Activated CD4-positive, alpha-beta T cell treated with anti-CD3 and anti-CD28 coated beads for 36 hours (primary cell): ENCODE measurements at regions of chr16 and their contacts with region 1.

Region 1: DNA sequence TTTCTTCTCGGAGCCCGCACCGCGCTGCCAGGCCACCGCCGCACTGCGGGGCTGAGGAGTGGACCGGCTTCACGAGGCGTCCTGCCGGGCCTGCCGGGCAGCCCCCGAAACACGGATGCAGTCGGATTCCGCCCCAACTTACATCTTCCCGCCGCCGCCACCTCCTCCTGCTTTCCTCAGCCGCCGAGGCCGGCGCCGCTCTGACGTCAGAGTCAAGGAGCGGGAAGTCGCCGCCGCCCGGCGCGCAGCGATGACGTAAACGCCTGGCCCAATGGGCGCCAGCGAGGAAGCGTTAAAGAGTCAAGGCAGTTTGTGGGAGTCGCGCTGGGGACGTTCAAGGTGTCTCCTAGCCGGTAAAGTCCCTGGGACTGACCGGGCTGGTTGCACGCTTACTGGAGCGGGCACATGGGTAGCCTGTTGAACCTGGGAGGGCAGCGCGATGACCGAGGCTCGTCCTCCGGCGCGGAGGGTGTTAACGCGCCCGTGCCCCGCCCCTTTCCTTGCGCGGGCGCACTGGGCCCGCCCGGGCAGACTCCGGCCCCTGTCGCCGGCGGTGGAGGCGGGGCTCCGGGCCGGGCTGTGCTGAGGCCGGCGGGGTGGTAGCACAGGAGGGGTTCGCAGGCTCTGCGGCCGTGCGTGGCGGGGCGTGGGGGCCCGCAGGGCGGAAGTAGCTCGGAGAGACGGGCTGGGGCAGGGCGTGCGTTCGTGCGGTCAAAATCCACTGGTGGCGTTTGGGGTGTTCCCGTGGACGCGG is at the start of gene RNPS1:
- DNase-seq: peak; percentile 98
- ATAC-seq: peak; percentile 86
- H3K4me3 Mint-ChIP-seq: peak within 1 kb of the TSS; percentile 92
- H3K27ac Mint-ChIP-seq: peak within 1 kb of the TSS; percentile 96
- H3K4me1 Mint-ChIP-seq: peaks cover 34% of the 10 kb centered on the region
- H3K27me3 Mint-ChIP-seq: no peaks in the 10 kb centered on the region
- total RNA-seq, gene RNPS1: 327 to 445 TPM

Region 2: DNA sequence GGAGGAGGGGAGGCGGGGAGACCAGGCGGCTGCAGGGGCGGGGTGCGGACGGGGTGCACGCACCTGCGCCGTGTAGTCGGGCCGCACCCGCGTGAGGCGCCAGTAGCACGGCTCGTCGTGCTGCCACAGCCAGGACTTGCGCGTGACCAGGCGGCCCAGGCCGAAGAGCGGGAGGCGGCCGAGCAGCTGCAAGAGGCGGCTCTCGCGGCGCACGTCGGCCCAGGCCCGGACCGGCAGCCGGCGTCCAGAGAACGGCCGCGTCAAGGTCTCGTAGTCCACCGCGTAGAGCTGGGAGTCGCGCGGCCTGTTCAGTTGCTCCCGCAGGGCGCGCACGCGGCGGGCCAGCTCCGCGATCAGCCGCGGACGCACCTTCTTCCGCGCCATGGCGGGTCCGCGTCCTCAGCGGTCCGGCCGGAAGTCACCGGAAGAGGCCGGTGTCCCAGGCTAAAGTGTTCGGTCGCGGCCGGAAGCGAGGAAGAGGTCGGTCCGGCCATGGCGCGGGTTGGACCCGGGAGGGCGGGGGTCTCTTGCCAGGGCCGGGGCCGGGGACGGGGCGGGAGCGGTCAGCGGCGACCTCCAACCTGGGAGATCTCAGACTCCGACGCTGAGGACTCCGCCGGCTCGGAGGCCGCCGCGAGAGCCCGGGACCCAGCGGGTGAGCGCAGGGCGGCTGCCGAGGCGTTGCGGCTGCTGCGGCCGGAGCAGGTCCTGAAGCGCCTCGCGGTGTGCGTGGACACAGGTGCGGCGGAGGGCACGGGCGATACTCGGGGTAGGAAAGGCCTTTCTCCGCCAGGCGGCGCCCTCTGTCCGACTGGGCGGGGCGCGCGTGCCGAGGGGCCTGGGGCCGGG is 495.1 kb before region 1 on chr16 and contains the starts of genes EME2 and MRPS34:
- CTCF ChIA-PET with region 1: no interaction called
- POLR2A ChIA-PET with region 1: no interaction called
- intact Hi-C with region 1: loop called in 1 of 2 experiments (anchors 1 kb)
- DNase-seq: peak; percentile 90
- ATAC-seq: peak; percentile 53
- H3K4me3 Mint-ChIP-seq: peak within 1 kb of the TSS; percentile 94
- H3K27ac Mint-ChIP-seq: peak within 1 kb of the TSS; percentile 99
- H3K4me1 Mint-ChIP-seq: peaks cover 9% of the 10 kb centered on the region
- H3K27me3 Mint-ChIP-seq: no peaks in the 10 kb centered on the region
- total RNA-seq, gene EME2: 13.1 to 18.4 TPM
- total RNA-seq, gene MRPS34: 146 to 175 TPM

Region 3: GRCh38 chr16:1991948-1992703 is 276.0 kb before region 1 on chr16:
- CTCF ChIA-PET with region 1: no interaction called
- POLR2A ChIA-PET with region 1: no interaction called
- intact Hi-C with region 1: loop called in 1 of 2 experiments (anchors 1 kb)
- DNase-seq: peak; percentile 100
- ATAC-seq: peak; percentile 70
- H3K4me3 Mint-ChIP-seq: peak overlapping the region; percentile 56
- H3K27ac Mint-ChIP-seq: no peak overlapping the region
- H3K4me1 Mint-ChIP-seq: peaks cover 27% of the 10 kb centered on the region
- H3K27me3 Mint-ChIP-seq: peaks cover 15% of the 10 kb centered on the region

Region 4: GRCh38 chr16:2213817-2214720 is 54.0 kb before region 1 on chr16:
- CTCF ChIA-PET with region 1: interaction called, 3 read pairs
- POLR2A ChIA-PET with region 1: no interaction called
- intact Hi-C with region 1: loop called (anchors 1 to 5 kb)
- DNase-seq: peak; percentile 40
- ATAC-seq: no peak
- H3K4me3 Mint-ChIP-seq: peak overlapping the region; percentile 79
- H3K27ac Mint-ChIP-seq: peak overlapping the region; percentile 45
- H3K4me1 Mint-ChIP-seq: peaks cover 18% of the 10 kb centered on the region
- H3K27me3 Mint-ChIP-seq: no peaks in the 10 kb centered on the region

Region 5: GRCh38 chr16:2459647-2460390 is 191.7 kb after region 1 on chr16 and contains the start of gene TEDC2:
- CTCF ChIA-PET with region 1: no interaction called
- POLR2A ChIA-PET with region 1: no interaction called
- intact Hi-C with region 1: loop called in 1 of 2 experiments (anchors 1 kb)
- DNase-seq: peak; percentile 99
- ATAC-seq: peak; percentile 98
- H3K4me3 Mint-ChIP-seq: peak within 1 kb of the TSS; percentile 73
- H3K27ac Mint-ChIP-seq: peak within 1 kb of the TSS; percentile 67
- H3K4me1 Mint-ChIP-seq: peaks cover 6% of the 10 kb centered on the region
- H3K27me3 Mint-ChIP-seq: no peaks in the 10 kb centered on the region
- total RNA-seq, gene TEDC2: 21.0 to 23.1 TPM

Region 6: DNA sequence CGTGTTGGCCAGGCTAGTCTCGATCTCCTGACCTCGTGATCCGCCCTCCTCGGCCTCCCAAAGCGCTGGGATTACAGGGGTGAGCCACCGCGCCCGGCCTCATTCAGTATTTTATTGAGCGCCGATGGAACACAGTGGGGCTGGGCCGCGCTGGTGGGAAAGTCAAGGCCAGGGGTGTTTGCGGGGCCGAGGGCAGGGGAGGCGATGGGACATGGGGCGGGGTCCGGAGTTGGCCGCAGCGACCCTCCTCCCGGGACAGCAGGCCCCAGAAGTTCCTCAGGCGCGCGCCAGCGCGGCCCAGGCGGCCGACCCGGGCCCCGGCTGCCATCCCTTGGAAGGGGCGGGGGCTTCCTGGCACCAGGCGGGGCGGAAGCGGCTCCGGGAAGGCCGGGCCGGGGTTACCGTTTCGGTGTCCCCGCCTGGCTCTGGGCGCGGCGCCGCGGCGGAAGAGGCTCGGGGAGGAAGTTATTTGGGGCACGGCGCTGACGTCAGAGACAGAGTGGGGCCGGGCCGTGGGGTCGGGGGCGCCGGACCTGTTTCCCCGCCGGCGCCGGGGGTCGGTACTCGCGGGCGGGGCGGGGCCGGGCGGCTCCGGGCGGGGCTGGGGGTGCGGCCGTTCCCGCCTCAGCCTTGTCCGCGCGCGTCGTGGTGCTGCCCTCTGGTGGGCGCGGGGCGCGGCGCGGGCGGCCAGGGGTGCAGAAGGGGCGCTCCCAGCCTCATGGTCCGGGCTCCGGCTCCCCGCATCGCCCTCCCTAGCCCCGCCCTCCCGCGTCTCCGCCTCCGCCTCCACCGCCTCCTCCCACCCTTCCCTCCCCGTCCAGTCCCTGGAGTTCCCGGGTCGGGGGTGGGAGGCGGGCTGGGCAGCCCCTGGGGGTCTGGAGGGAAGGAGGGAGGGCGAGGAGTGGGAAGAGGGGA is 452.9 kb after region 1 on chr16:
- CTCF ChIA-PET with region 1: interaction called, 3 read pairs
- POLR2A ChIA-PET with region 1: no interaction called
- intact Hi-C with region 1: loop called in 1 of 2 experiments (anchors 1 kb)
- DNase-seq: peak; percentile 95
- ATAC-seq: peak; percentile 91
- H3K4me3 Mint-ChIP-seq: peak overlapping the region; percentile 77
- H3K27ac Mint-ChIP-seq: peak overlapping the region; percentile 83
- H3K4me1 Mint-ChIP-seq: no peaks in the 10 kb centered on the region
- H3K27me3 Mint-ChIP-seq: peaks cover 9% of the 10 kb centered on the region